ENCODE measurements at regions of chr4 and their contacts with region 1.

Region 1: GRCh38 chr4:17544205-17544604 is 29.2 kb downstream of the CLRN2 start:
- DNase-seq: no peak
- H3K4me3 ChIP-seq: no peak overlapping the region
- H3K27ac ChIP-seq: no peak overlapping the region
- H3K4me1 ChIP-seq: peaks cover 0 to 3% of the 10 kb centered on the region in 2 experiments; a peak in 1 of 4 replicates
- H3K27me3 ChIP-seq: no peaks in the 10 kb centered on the region; the same call in 1 of the 2 replicates
- CTCF ChIP-seq: no peak
- EP300 ChIP-seq: no peak
- RAD21 ChIP-seq: no peak

Region 2: GRCh38 chr4:17236686-17237085 is 307.5 kb before region 1 on chr4:
- CTCF ChIA-PET with region 1: no interaction called
- POLR2A ChIA-PET with region 1: no interaction called
- DNase-seq: no peak
- H3K4me3 ChIP-seq: no peak overlapping the region
- H3K27ac ChIP-seq: peak overlapping the region in 1 of 2 experiments; percentile 33; a peak in 1 of 4 replicates
- H3K4me1 ChIP-seq: peaks cover 16 to 20% of the 10 kb centered on the region in 2 experiments; a peak in 3 of 4 replicates
- H3K27me3 ChIP-seq: no peaks in the 10 kb centered on the region
- CTCF ChIP-seq: no peak
- EP300 ChIP-seq: no peak
- RAD21 ChIP-seq: no peak

Region 3: DNA sequence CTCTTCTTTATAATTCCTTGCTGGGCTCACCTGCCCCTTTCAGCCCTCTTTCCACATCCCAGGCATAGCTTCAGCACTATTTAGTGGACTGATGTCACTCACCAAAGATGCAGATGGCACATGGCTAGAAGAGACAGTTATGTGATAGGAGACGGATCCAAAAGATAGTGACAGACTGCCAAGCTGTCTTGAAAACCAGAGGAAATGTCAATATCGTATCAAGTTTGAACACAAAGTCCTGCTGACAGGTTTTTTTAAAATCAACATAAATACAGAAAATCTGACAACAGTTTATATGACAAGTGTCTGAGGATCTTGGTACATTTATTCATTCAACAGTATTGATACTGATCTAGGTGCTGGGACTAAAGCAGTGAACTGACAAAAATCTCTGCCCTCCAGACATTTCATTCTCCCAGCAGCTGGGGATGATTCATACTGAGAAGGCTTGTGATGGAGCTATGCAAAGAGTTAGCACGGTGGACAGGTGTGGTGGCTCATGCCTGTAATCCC is 14.7 kb before region 1 on chr4:
- CTCF ChIA-PET with region 1: interaction called, 11 read pairs
- POLR2A ChIA-PET with region 1: no interaction called
- DNase-seq: peak; percentile 36
- H3K4me3 ChIP-seq: no peak overlapping the region
- H3K27ac ChIP-seq: no peak overlapping the region
- H3K4me1 ChIP-seq: no peaks in the 10 kb centered on the region; a peak in 1 of 4 replicates
- H3K27me3 ChIP-seq: peaks cover 3% of the 10 kb centered on the region; the same call in 1 of the 2 replicates
- CTCF ChIP-seq: no peak
- EP300 ChIP-seq: no peak
- RAD21 ChIP-seq: no peak

Region 4: GRCh38 chr4:17557880-17558279 is 13.7 kb after region 1 on chr4:
- CTCF ChIA-PET with region 1: interaction called, 10 read pairs
- POLR2A ChIA-PET with region 1: no interaction called
- DNase-seq: no peak
- H3K4me3 ChIP-seq: no peak overlapping the region
- H3K27ac ChIP-seq: no peak overlapping the region
- H3K4me1 ChIP-seq: peaks cover 0 to 17% of the 10 kb centered on the region in 2 experiments; a peak in 1 of 4 replicates
- H3K27me3 ChIP-seq: peaks cover 10% of the 10 kb centered on the region; the same call in 1 of the 2 replicates
- CTCF ChIP-seq: no peak
- EP300 ChIP-seq: no peak
- RAD21 ChIP-seq: no peak

Region 5: GRCh38 chr4:17576932-17577665 is 32.9 kb after region 1 on chr4 and contains the start of gene LAP3:
- CTCF ChIA-PET with region 1: interaction called, 15 read pairs
- POLR2A ChIA-PET with region 1: no interaction called
- DNase-seq: peak; percentile 97
- H3K4me3 ChIP-seq: peak within 1 kb of the TSS; percentile 62 to 95
- H3K27ac ChIP-seq: peak within 1 kb of the TSS; percentile 77 to 81
- H3K4me1 ChIP-seq: peaks cover 8 to 9% of the 10 kb centered on the region in 2 experiments; a peak in 2 of 4 replicates
- H3K27me3 ChIP-seq: no peaks in the 10 kb centered on the region
- CTCF ChIP-seq: no peak
- EP300 ChIP-seq: no peak
- RAD21 ChIP-seq: 0 out of 2 replicates have a peak, but pooled peaks have one; percentile 5
- polyA plus RNA-seq, gene LAP3: 53.2 and 67.8 TPM in 2 replicates

Region 6: GRCh38 chr4:17614416-17615299 is 70.5 kb after region 1 on chr4 and contains the start of gene MED28:
- CTCF ChIA-PET with region 1: interaction called, 10 read pairs
- POLR2A ChIA-PET with region 1: no interaction called
- DNase-seq: peak; percentile 95
- H3K4me3 ChIP-seq: peak within 1 kb of the TSS; percentile 78 to 80
- H3K27ac ChIP-seq: peak within 1 kb of the TSS; percentile 77 to 81
- H3K4me1 ChIP-seq: peaks cover 6 to 7% of the 10 kb centered on the region in 2 experiments; a peak in 2 of 4 replicates
- H3K27me3 ChIP-seq: no peaks in the 10 kb centered on the region
- CTCF ChIP-seq: peak; percentile 19; the same call in 1 of the 2 replicates
- EP300 ChIP-seq: no peak
- RAD21 ChIP-seq: no peak
- polyA plus RNA-seq, gene MED28: 5.9 and 7.5 TPM in 2 replicates

Region 7: GRCh38 chr4:17636696-17637622 is 92.8 kb after region 1 on chr4:
- CTCF ChIA-PET with region 1: interaction called, 42 read pairs
- POLR2A ChIA-PET with region 1: no interaction called
- DNase-seq: peak; percentile 92
- H3K4me3 ChIP-seq: peak overlapping the region in 1 of 2 experiments; percentile 53; a peak in 1 of 4 replicates
- H3K27ac ChIP-seq: no peak overlapping the region
- H3K4me1 ChIP-seq: no peaks in the 10 kb centered on the region; a peak in 1 of 4 replicates
- H3K27me3 ChIP-seq: no peaks in the 10 kb centered on the region
- CTCF ChIP-seq: peak; percentile 92
- EP300 ChIP-seq: no peak
- RAD21 ChIP-seq: peak; percentile 81

Region 8: GRCh38 chr4:17662694-17663093 is 118.5 kb after region 1 on chr4:
- CTCF ChIA-PET with region 1: no interaction called
- POLR2A ChIA-PET with region 1: no interaction called
- DNase-seq: no peak
- H3K4me3 ChIP-seq: no peak overlapping the region
- H3K27ac ChIP-seq: no peak overlapping the region
- H3K4me1 ChIP-seq: peaks cover 0 to 10% of the 10 kb centered on the region in 2 experiments; a peak in 1 of 4 replicates
- H3K27me3 ChIP-seq: no peaks in the 10 kb centered on the region
- CTCF ChIP-seq: no peak
- EP300 ChIP-seq: no peak
- RAD21 ChIP-seq: no peak

Region 9: DNA sequence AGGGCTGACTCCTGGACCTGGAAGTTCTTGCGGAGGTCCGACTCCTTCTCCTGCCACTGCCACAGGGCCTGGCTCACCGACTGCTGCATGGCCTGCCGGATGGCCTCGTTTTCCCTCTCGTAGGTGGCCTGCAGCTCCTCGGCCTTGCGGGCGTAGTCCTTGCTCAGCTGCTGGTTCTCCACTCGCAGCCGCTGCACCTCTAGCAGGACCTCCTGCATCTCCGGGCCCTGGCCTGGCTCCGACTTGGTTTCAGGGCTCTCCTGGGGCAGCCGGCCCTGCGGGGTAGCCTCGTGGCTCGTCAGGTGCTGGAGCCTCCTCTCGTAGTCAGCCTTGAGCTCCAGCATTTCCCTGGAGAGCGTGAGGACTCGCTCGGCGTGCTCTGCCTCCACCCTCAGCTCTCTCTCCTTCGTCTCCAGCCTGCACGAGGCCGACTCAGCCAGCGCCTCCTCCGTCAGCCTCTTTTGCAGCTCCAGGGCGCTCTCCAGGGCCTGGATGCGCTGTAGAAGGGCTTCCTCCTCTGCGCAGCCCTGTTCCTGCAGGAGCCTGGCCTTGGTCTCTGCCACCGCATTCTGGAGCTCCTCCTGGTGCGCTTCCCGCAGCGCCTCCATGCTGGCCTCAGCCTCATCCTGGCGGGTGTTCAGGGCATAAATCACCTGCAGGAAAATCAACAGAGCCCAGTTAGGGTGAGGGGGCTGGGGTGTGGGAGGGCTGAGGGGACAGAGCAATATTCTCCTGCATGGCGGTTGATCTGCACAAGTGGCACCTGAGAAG is 165.0 kb after region 1 on chr4:
- CTCF ChIA-PET with region 1: no interaction called
- POLR2A ChIA-PET with region 1: no interaction called
- DNase-seq: no peak
- H3K4me3 ChIP-seq: no peak overlapping the region
- H3K27ac ChIP-seq: no peak overlapping the region
- H3K4me1 ChIP-seq: no peaks in the 10 kb centered on the region
- H3K27me3 ChIP-seq: no peaks in the 10 kb centered on the region; the same call in 1 of the 2 replicates
- CTCF ChIP-seq: no peak
- EP300 ChIP-seq: no peak
- RAD21 ChIP-seq: no peak

Measured in SK-N-SH (cell line).